Mammary epithelial cell (primary cell): ENCODE measurements at regions of chr17 and their contacts with region 1.

Region 1: DNA sequence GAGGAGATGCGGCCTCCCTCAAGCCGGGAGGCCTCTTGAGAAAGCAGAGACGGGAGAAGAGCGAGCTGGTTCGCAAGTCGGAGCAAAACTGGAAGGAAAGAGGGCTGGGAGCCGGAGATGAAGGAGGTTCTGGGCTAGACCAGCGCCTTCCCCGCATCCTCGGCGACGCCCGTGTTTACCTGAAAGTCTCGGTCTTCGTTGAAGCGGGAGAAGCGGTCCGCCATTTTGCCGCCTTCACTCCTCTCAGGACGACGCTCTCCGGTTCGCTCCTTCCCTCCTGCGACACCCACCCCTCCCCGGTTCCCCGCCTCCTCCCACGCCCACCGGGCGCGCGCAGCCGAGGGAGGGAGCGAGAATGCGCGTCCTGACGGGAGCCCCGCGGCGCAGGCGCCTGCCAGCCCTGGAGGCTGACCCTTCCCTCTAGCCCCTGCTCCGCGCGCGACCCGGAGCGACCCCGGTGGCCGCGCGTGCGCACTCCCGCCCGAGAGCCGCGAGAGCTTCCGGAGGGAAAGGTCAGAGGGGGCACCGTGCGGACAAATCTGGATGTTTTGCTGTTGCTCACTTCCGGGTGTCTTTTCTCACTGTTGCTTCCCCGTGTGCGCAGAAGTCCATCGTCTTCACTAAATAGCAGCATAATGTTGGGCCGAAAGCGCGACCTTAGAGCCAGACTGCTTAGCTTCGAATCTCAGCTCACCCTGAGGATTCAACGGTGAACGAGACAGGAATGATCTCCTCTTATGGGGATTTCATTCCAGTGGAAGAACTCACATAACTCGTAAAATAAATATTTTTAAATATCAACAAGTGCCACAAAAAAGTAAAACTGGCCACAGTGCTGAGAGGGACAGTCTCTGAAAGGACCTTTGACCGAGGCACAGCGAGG is at the start of gene GPATCH8:
- DNase-seq: peak; percentile 96
- H3K4me3 ChIP-seq: peak within 1 kb of the TSS; percentile 77 to 87 (median 80)
- H3K27ac ChIP-seq: peak within 1 kb of the TSS; percentile 91
- H3K4me1 ChIP-seq: peaks cover 23% of the 10 kb centered on the region
- H3K27me3 ChIP-seq: no peaks in the 10 kb centered on the region
- CTCF ChIP-seq: no peak
- total RNA-seq, gene GPATCH8: 27.0 to 37.4 TPM

Region 2: GRCh38 chr17:44400226-44400847 is 103.1 kb before region 1 on chr17:
- CTCF ChIA-PET with region 1: no interaction called
- dilution Hi-C with region 1: no loop called
- in situ Hi-C with region 1: no loop called
- intact Hi-C with region 1: loop called (anchors 5 kb)
- DNase-seq: no peak
- H3K4me3 ChIP-seq: no peak overlapping the region
- H3K27ac ChIP-seq: no peak overlapping the region
- H3K4me1 ChIP-seq: no peaks in the 10 kb centered on the region
- H3K27me3 ChIP-seq: no peaks in the 10 kb centered on the region
- CTCF ChIP-seq: peak; percentile 33 to 46

Region 3: GRCh38 chr17:44417553-44417952 is 85.8 kb before region 1 on chr17:
- CTCF ChIA-PET with region 1: no interaction called
- dilution Hi-C with region 1: no loop called
- in situ Hi-C with region 1: no loop called
- intact Hi-C with region 1: loop called (anchors 1 kb)
- DNase-seq: peak; percentile 95
- H3K4me3 ChIP-seq: no peak overlapping the region
- H3K27ac ChIP-seq: peak overlapping the region; percentile 44
- H3K4me1 ChIP-seq: peaks cover 7% of the 10 kb centered on the region
- H3K27me3 ChIP-seq: no peaks in the 10 kb centered on the region
- CTCF ChIP-seq: no peak

Region 4: GRCh38 chr17:44444735-44445105 is 58.7 kb before region 1 on chr17:
- CTCF ChIA-PET with region 1: interaction called, 8 read pairs
- dilution Hi-C with region 1: no loop called
- in situ Hi-C with region 1: no loop called
- intact Hi-C with region 1: loop called (anchors 5 kb)
- DNase-seq: peak; percentile 61
- H3K4me3 ChIP-seq: no peak overlapping the region
- H3K27ac ChIP-seq: peak overlapping the region; percentile 7
- H3K4me1 ChIP-seq: peaks cover 5% of the 10 kb centered on the region
- H3K27me3 ChIP-seq: no peaks in the 10 kb centered on the region
- CTCF ChIP-seq: no peak

Region 5: GRCh38 chr17:44487170-44487569 is 16.2 kb before region 1 on chr17:
- CTCF ChIA-PET with region 1: no interaction called
- dilution Hi-C with region 1: no loop called
- in situ Hi-C with region 1: no loop called
- intact Hi-C with region 1: no loop called
- DNase-seq: no peak
- H3K4me3 ChIP-seq: no peak overlapping the region
- H3K27ac ChIP-seq: no peak overlapping the region
- H3K4me1 ChIP-seq: no peaks in the 10 kb centered on the region
- H3K27me3 ChIP-seq: no peaks in the 10 kb centered on the region
- CTCF ChIP-seq: no peak